AG04450 (cell line): ENCODE measurements at regions of chr11 and their contacts with region 1.

Region 1: GRCh38 chr11:44589301-44589700 is 23.8 kb downstream of the CD82 start:
- DNase-seq: peak; percentile 84
- H3K4me3 ChIP-seq: no peak overlapping the region
- H3K27ac ChIP-seq: peak overlapping the region; percentile 96
- H3K27me3 ChIP-seq: no peaks in the 10 kb centered on the region
- CTCF ChIP-seq: no peak

Region 2: GRCh38 chr11:44565211-44565952 is 23.9 kb before region 1 on chr11 and contains the start of gene CD82:
- CTCF ChIA-PET with region 1: interaction called, 3 read pairs
- POLR2A ChIA-PET with region 1: interaction called, 10 read pairs
- DNase-seq: peak; percentile 96
- H3K4me3 ChIP-seq: peak within 1 kb of the TSS; percentile 83
- H3K27ac ChIP-seq: peak within 1 kb of the TSS; percentile 99
- H3K27me3 ChIP-seq: no peaks in the 10 kb centered on the region
- CTCF ChIP-seq: peak; percentile 26; the same call in 1 of the 2 replicates
- polyA plus RNA-seq, gene CD82: 49.3 and 62.0 TPM in 2 replicates

Region 3: GRCh38 chr11:44658506-44658850 is 69.2 kb after region 1 on chr11:
- CTCF ChIA-PET with region 1: no interaction called
- POLR2A ChIA-PET with region 1: no interaction called
- DNase-seq: no peak
- H3K4me3 ChIP-seq: no peak overlapping the region
- H3K27ac ChIP-seq: no peak overlapping the region
- H3K27me3 ChIP-seq: peaks cover 15% of the 10 kb centered on the region
- CTCF ChIP-seq: peak; percentile 37

Region 4: GRCh38 chr11:44785856-44786606 is 196.7 kb after region 1 on chr11:
- CTCF ChIA-PET with region 1: no interaction called
- POLR2A ChIA-PET with region 1: no interaction called
- DNase-seq: no peak
- H3K4me3 ChIP-seq: no peak overlapping the region
- H3K27ac ChIP-seq: no peak overlapping the region
- H3K27me3 ChIP-seq: peaks cover 22% of the 10 kb centered on the region
- CTCF ChIP-seq: peak; percentile 20; the same call in 1 of the 2 replicates